MCF 10A (cell line): ENCODE measurements at regions of chr3 and their contacts with region 1.

Region 1: GRCh38 chr3:172039436-172040077 is at the start of gene FNDC3B:
- DNase-seq: peak; percentile 94
- H3K4me3 Mint-ChIP-seq: peak within 1 kb of the TSS; percentile 95
- H3K27ac Mint-ChIP-seq: peak within 1 kb of the TSS; percentile 84
- H3K4me1 Mint-ChIP-seq: peaks cover 24% of the 10 kb centered on the region
- H3K27me3 Mint-ChIP-seq: no peaks in the 10 kb centered on the region
- CTCF ChIP-seq: no peak
- total RNA-seq, gene FNDC3B: 149 TPM in 2 replicates

Region 2: DNA sequence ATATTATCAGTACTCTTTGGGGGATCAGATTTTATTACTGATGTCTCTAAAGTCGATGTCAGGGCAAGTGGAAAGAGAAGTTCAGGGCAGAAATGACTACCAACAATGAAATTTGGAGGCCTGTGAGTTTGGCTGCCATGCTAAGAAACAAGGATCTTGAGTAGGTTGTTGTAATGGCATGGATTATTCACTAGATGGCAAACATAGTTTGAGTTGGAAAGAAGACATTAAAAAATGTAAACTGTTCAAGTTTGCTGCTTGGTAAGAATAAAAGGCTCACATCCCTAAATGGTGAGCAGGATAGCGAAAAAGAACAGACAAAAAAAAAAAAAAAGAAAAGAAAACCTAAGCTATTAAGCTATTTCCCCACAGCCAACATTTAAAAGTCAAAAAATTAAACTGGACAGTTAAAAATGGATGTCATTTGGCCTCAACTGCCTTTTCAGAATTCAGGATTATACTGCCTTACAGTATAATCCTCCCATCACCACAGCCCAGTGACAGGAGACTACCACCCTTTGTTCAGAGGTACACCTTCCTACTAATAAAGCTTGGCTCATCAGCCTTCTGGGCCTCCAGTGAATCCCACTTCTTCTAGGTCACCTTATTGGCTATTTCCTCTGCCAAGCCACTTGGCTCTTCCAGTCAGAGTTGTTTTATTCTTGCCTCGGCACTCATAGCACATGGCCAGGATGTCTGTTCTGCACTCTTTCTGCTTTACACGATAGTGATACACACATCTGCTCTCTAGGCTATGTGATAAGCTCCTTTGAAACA is 393.0 kb before region 1 on chr3:
- CTCF ChIA-PET with region 1: no interaction called
- POLR2A ChIA-PET with region 1: interaction called, 3 read pairs
- intact Hi-C with region 1: loop called (anchors 5 kb)
- DNase-seq: peak; percentile 55
- H3K4me3 Mint-ChIP-seq: no peak overlapping the region
- H3K27ac Mint-ChIP-seq: no peak overlapping the region
- H3K4me1 Mint-ChIP-seq: no peaks in the 10 kb centered on the region
- H3K27me3 Mint-ChIP-seq: no peaks in the 10 kb centered on the region
- CTCF ChIP-seq: peak; percentile 73

Region 3: GRCh38 chr3:171876680-171877221 is 162.8 kb before region 1 on chr3:
- CTCF ChIA-PET with region 1: no interaction called
- POLR2A ChIA-PET with region 1: interaction called, 3 read pairs
- intact Hi-C with region 1: loop called (anchors 2 kb)
- DNase-seq: peak; percentile 85
- H3K4me3 Mint-ChIP-seq: peak overlapping the region; percentile 47
- H3K27ac Mint-ChIP-seq: peak overlapping the region; percentile 77
- H3K4me1 Mint-ChIP-seq: peaks cover 47% of the 10 kb centered on the region
- H3K27me3 Mint-ChIP-seq: no peaks in the 10 kb centered on the region
- CTCF ChIP-seq: no peak

Region 4: DNA sequence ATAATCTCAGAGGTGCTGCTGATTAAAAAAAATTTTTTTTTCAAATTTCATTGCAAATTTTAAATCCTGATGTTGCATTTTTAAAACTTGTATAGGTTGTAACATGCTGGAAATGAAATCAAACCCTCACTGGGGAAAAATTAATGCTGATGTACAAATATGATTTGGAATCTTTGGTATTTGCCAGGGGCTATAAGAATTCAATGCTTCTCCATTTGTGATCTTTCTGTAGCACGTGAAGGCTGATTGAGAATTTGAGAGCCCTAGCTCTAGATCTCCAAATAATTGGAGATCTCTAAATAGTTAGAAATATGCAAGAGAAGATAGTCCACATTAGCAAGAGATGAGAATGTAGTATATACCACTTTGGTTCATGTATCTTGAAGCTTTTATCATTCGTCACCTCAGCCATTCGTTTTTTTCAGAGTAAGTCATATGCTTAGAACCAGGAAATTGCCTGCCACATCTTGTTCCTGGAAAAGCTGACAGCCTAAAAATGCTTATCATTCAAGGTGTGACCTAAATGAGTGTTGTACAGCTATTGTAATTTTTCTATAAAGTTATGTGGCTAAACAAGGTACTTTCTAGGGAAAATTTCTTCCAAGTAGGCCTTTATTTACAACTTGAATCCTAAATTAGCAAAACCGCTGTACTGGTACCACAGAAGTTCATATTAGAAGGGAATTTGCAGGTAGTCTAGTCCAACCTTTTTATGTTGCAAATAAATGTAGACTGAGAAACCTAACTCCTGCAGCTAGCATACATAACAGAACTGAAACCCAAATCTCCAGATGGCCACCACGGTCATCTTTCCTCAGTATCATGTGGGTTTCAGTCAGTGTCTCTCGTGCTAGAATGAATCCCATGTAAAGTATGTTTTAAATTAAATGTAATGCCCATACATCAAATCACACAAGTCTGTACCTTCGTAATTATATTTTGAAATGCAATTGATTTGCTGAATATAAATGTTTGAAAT is 48.3 kb after region 1 on chr3:
- CTCF ChIA-PET with region 1: interaction called, 3 read pairs
- POLR2A ChIA-PET with region 1: interaction called, 33 read pairs
- intact Hi-C with region 1: no loop called
- DNase-seq: no peak
- H3K4me3 Mint-ChIP-seq: peak overlapping the region; percentile 48
- H3K27ac Mint-ChIP-seq: peak overlapping the region; percentile 75
- H3K4me1 Mint-ChIP-seq: peaks cover 35% of the 10 kb centered on the region
- H3K27me3 Mint-ChIP-seq: no peaks in the 10 kb centered on the region
- CTCF ChIP-seq: no peak

Region 5: DNA sequence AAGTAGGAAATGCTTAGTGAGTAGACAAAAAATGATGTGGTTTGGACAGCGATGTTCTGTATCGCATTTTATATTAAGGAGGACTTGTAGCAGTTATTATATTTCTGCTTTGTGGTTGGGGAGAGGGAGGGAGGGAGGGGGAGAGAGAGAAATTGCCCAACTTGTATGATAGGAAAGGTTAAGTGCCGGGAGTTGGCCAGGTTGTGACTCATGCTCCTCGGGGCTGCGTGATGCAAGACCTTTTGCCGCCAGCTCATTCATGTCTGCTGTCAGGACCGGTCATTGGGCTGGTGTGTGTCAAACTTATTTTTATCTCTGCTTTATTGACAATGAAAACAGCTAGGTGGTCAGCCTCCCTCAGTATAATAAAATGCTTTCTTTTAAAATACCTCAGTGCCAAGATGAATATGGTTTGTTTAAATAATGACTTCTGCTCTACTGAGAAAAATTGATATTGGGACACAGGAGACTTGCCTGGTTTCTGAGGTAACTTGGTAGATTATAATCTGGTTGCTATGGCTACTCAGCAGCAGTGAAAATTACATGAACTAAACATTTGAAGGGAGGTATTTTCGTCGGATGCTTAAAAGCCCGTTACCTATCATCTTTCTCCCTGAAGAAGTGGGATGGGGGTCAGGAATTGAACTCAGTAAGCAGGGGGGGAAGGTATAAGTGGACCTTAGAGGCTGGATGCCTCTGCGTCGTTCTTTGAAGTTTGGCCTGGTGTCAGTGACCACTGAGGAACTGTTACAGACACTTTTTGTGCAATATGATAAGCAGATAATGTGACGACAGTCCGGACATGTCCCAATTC is 90.5 kb after region 1 on chr3:
- CTCF ChIA-PET with region 1: interaction called, 4 read pairs
- POLR2A ChIA-PET with region 1: interaction called, 36 read pairs
- intact Hi-C with region 1: loop called (anchors 1 kb)
- DNase-seq: peak; percentile 98
- H3K4me3 Mint-ChIP-seq: peak overlapping the region; percentile 48
- H3K27ac Mint-ChIP-seq: peak overlapping the region; percentile 99
- H3K4me1 Mint-ChIP-seq: peaks cover 36% of the 10 kb centered on the region
- H3K27me3 Mint-ChIP-seq: no peaks in the 10 kb centered on the region
- CTCF ChIP-seq: no peak

Region 6: GRCh38 chr3:172236771-172237742 is 197.5 kb after region 1 on chr3:
- CTCF ChIA-PET with region 1: no interaction called
- POLR2A ChIA-PET with region 1: no interaction called
- intact Hi-C with region 1: no loop called
- DNase-seq: no peak
- H3K4me3 Mint-ChIP-seq: no peak overlapping the region
- H3K27ac Mint-ChIP-seq: no peak overlapping the region
- H3K4me1 Mint-ChIP-seq: no peaks in the 10 kb centered on the region
- H3K27me3 Mint-ChIP-seq: no peaks in the 10 kb centered on the region
- CTCF ChIP-seq: no peak

Region 7: DNA sequence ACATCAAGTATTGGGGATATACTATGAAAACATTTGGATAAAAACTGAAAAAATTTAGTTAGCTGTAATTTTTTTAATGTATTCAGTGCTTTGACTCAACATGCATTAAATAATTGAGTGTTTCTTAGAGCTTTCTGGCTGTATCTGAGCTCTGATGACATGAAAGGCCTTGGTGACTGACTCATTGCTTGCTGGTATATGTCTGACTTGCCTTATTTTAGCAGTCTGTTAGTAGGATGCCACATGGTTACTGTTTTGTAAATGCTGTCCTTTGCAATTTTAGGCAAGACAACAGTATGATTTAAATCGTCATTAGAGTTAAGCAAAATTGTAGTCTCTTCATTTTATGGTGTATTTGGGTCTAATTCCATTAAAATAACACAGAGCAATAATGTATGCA is 209.5 kb after region 1 on chr3:
- CTCF ChIA-PET with region 1: no interaction called
- POLR2A ChIA-PET with region 1: interaction called, 4 read pairs
- intact Hi-C with region 1: loop called (anchors 2 kb)
- DNase-seq: peak; percentile 55
- H3K4me3 Mint-ChIP-seq: no peak overlapping the region
- H3K27ac Mint-ChIP-seq: no peak overlapping the region
- H3K4me1 Mint-ChIP-seq: peaks cover 25% of the 10 kb centered on the region
- H3K27me3 Mint-ChIP-seq: no peaks in the 10 kb centered on the region
- CTCF ChIP-seq: no peak